Caco-2 (cell line): ENCODE measurements at regions of chr16 and their contacts with region 1.

Region 1: DNA sequence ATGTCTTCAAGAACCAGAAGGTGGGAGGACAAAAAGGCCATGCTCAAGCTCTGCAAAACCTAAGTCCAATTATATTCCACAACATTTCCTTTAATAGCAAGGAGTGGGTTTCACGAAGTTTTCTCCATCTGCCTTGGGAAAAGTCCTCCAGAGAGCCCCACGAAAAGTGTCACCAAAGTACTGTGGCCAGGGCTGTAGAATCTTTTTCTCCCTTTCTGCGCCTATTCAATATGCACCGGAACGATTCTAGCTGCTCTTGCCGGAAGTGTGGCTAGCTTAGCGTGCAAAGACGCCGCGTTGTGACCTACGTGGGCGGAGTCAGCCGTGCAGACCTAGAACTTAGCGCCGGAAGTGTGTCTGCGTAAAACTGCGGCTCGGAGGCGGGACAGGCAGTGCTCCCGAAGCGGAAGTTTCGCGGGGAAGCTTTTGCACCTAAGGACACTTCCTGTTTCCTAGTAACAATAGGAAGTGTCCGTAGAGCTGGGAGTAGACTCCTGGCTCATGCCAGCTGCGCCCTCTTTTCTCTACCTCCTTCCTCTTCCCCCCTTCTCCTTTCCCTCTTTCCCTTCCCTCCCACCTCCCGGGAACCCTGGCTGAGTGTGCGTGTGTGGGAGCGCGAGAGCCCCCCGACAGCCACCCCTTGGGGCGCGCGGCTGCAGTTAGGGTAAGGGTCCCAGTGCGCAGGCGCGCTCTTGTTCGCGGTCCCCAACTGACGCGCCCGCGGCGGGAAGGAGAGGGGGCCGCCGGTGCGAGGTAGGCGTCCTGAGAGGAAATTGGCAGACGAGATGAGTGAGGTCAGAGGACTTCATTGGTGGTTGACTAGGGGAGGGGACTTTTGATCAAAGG is at the starts of genes ZNF646 and ZNF668:
- DNase-seq: peak; percentile 94 to 98
- H3K4me3 ChIP-seq: peak within 1 kb of the TSS; percentile 79
- H3K4me3 Mint-ChIP-seq: peak within 1 kb of the TSS; percentile 84
- H3K27ac Mint-ChIP-seq: peak within 1 kb of the TSS; percentile 58
- H3K4me1 ChIP-seq: peaks cover 9% of the 10 kb centered on the region; the same call in 1 of the 2 replicates
- H3K4me1 Mint-ChIP-seq: peaks cover 7% of the 10 kb centered on the region
- H3K27me3 ChIP-seq: no peaks in the 10 kb centered on the region
- H3K27me3 Mint-ChIP-seq: no peaks in the 10 kb centered on the region
- CTCF ChIP-seq: no peak
- total RNA-seq, gene ZNF646: 17.2 and 18.1 TPM in 2 replicates
- total RNA-seq, gene ZNF668: 8.7 and 10.8 TPM in 2 replicates

Region 2: DNA sequence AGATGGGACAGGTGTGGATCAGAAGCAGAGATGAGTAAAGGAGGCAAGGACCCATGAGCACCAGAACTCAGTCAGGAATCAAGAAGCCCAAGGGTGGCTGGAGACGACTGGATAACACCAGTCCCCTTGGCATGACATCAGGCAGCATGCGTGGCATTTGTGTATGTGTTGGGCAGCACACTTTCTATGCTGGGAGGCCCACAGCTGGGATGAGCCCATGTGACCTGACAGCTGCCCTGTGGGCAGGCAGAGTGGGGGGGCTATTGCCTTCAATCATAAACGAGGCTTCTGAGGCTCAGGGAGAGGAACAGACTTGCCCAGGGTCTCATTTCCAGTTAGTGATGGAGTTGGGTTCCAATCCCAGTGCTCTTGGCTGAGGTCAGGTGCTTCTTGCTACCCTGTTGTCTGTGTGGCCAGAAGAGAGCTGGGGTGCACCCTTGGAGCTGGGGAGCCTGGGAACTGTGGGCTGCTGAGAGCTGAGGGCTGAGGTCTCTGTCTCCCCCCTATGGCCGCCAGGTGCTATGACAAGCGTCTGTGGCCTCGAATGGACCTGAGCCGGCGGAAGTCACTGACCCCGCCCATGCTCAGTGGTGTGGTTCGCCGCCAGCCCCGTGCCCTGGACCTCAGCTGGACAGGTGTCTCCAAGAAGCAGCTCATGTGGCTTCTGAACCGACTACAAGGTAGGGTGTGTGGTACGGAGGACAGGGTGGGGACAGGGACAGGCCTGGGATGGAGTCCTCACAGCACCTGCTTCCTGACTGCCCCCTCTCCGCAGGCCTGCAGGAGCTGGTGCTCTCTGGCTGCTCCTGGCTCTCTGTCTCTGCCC is 132.4 kb before region 1 on chr16:
- CTCF ChIA-PET with region 1: no interaction called
- POLR2A ChIA-PET with region 1: no interaction called
- intact Hi-C with region 1: no loop called
- DNase-seq: peak; percentile 70 to 82
- H3K4me3 ChIP-seq: no peak overlapping the region
- H3K4me3 Mint-ChIP-seq: no peak overlapping the region
- H3K27ac Mint-ChIP-seq: no peak overlapping the region
- H3K4me1 ChIP-seq: peaks cover 7% of the 10 kb centered on the region; the same call in 1 of the 2 replicates
- H3K4me1 Mint-ChIP-seq: no peaks in the 10 kb centered on the region
- H3K27me3 ChIP-seq: no peaks in the 10 kb centered on the region
- H3K27me3 Mint-ChIP-seq: no peaks in the 10 kb centered on the region
- CTCF ChIP-seq: peak; percentile 80 to 91

Region 3: GRCh38 chr16:31032736-31033708 is 41.2 kb before region 1 on chr16 and contains the start of gene STX4:
- CTCF ChIA-PET with region 1: no interaction called
- POLR2A ChIA-PET with region 1: interaction called, 6 read pairs
- intact Hi-C with region 1: loop called (anchors 1 kb)
- DNase-seq: peak; percentile 92 to 93
- H3K4me3 ChIP-seq: peak within 1 kb of the TSS; percentile 98
- H3K4me3 Mint-ChIP-seq: peak within 1 kb of the TSS; percentile 96
- H3K27ac Mint-ChIP-seq: peak within 1 kb of the TSS; percentile 81
- H3K4me1 ChIP-seq: no peaks in the 10 kb centered on the region
- H3K4me1 Mint-ChIP-seq: peaks cover 7% of the 10 kb centered on the region
- H3K27me3 ChIP-seq: no peaks in the 10 kb centered on the region
- H3K27me3 Mint-ChIP-seq: no peaks in the 10 kb centered on the region
- CTCF ChIP-seq: no peak
- total RNA-seq, gene STX4: 27.9 and 29.2 TPM in 2 replicates

Region 4: DNA sequence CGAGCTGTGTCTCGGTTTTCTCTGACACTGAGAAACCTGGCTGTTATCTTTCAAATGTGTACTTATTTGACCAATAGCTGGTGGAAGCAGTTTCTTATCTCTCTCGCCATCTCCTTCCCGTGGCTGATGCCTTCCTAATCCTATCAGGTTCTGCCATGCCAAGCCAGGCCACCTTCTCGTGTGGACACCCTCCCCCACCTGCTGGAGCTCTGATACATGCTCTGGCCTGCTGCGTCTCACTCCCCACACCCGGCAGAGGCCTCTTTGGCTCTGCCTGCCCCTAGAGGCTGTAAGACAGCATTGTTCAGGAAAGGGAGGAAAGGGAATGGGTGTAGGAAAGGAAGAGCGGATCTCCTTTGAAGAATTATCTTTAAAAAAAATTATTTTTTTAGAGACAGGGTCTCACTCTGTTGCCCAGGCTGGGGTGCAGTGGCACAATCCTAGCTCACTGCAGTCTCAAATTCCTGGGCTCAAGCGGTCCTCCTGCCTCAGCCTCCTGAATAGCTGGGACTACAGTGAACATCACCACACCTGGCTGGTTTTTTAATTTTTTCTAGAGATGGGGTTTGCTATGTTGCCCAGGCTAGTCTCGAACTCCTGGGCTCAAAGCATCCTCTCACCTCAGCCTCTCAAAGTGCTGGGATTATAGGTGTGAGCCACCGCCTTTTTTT is 377.6 kb after region 1 on chr16:
- CTCF ChIA-PET with region 1: interaction called, 10 read pairs
- POLR2A ChIA-PET with region 1: interaction called, 5 read pairs
- intact Hi-C with region 1: no loop called
- DNase-seq: peak; percentile 78 to 79
- H3K4me3 ChIP-seq: no peak overlapping the region
- H3K4me3 Mint-ChIP-seq: peak overlapping the region; percentile 1
- H3K27ac Mint-ChIP-seq: no peak overlapping the region
- H3K4me1 ChIP-seq: peaks cover 11% of the 10 kb centered on the region
- H3K4me1 Mint-ChIP-seq: peaks cover 13% of the 10 kb centered on the region
- H3K27me3 ChIP-seq: no peaks in the 10 kb centered on the region
- H3K27me3 Mint-ChIP-seq: no peaks in the 10 kb centered on the region
- CTCF ChIP-seq: peak; percentile 59 to 73